Endothelial cell of umbilical vein (primary cell): ENCODE measurements at regions of chr6 and their contacts with region 1.

Region 1: GRCh38 chr6:27518881-27519795 is 46.2 kb upstream of the ZNF184 start:
- DNase-seq: peak; percentile 93
- H3K4me3 ChIP-seq: peak overlapping the region; percentile 47 to 74 (median 61)
- H3K27ac ChIP-seq: peak overlapping the region; percentile 27
- H3K4me1 ChIP-seq: peaks cover 3% of the 10 kb centered on the region
- H3K27me3 ChIP-seq: peaks cover 19 to 30% of the 10 kb centered on the region in 2 experiments
- CTCF ChIP-seq: peak; percentile 57 to 63
- POLR2A ChIP-seq: no peak

Region 2: GRCh38 chr6:27157459-27158315 is 361.5 kb before region 1 on chr6:
- CTCF ChIA-PET with region 1: interaction called, 8 read pairs
- POLR2A ChIA-PET with region 1: no interaction called
- dilution Hi-C with region 1: no loop called
- intact Hi-C with region 1: loop called (anchors 1 kb)
- DNase-seq: peak; percentile 57
- H3K4me3 ChIP-seq: peak overlapping the region; percentile 30 to 64 (median 59)
- H3K27ac ChIP-seq: no peak overlapping the region
- H3K4me1 ChIP-seq: peaks cover 10% of the 10 kb centered on the region
- H3K27me3 ChIP-seq: peaks cover 8 to 11% of the 10 kb centered on the region in 2 experiments
- CTCF ChIP-seq: peak; percentile 42 to 63
- POLR2A ChIP-seq: no peak

Region 3: GRCh38 chr6:27460701-27461100 is 58.4 kb before region 1 on chr6:
- CTCF ChIA-PET with region 1: no interaction called
- POLR2A ChIA-PET with region 1: no interaction called
- dilution Hi-C with region 1: no loop called
- intact Hi-C with region 1: no loop called
- DNase-seq: no peak
- H3K4me3 ChIP-seq: no peak overlapping the region
- H3K27ac ChIP-seq: no peak overlapping the region
- H3K4me1 ChIP-seq: no peaks in the 10 kb centered on the region
- H3K27me3 ChIP-seq: no peaks in the 10 kb centered on the region
- CTCF ChIP-seq: no peak
- POLR2A ChIP-seq: no peak

Region 4: GRCh38 chr6:27472617-27473400 is 46.3 kb before region 1 on chr6 and contains the start of gene ZNF184:
- CTCF ChIA-PET with region 1: interaction called, 8 read pairs
- POLR2A ChIA-PET with region 1: no interaction called
- dilution Hi-C with region 1: no loop called
- intact Hi-C with region 1: loop called (anchors 1 kb)
- DNase-seq: peak; percentile 98
- H3K4me3 ChIP-seq: peak within 1 kb of the TSS; percentile 68 to 94 (median 82)
- H3K27ac ChIP-seq: peak within 1 kb of the TSS; percentile 74
- H3K4me1 ChIP-seq: peaks cover 9% of the 10 kb centered on the region
- H3K27me3 ChIP-seq: peaks cover 9 to 14% of the 10 kb centered on the region in 2 experiments
- CTCF ChIP-seq: no peak
- POLR2A ChIP-seq: peak; percentile 84
- total RNA-seq, gene ZNF184: 5.4 and 6.5 TPM in 2 replicates

Region 5: DNA sequence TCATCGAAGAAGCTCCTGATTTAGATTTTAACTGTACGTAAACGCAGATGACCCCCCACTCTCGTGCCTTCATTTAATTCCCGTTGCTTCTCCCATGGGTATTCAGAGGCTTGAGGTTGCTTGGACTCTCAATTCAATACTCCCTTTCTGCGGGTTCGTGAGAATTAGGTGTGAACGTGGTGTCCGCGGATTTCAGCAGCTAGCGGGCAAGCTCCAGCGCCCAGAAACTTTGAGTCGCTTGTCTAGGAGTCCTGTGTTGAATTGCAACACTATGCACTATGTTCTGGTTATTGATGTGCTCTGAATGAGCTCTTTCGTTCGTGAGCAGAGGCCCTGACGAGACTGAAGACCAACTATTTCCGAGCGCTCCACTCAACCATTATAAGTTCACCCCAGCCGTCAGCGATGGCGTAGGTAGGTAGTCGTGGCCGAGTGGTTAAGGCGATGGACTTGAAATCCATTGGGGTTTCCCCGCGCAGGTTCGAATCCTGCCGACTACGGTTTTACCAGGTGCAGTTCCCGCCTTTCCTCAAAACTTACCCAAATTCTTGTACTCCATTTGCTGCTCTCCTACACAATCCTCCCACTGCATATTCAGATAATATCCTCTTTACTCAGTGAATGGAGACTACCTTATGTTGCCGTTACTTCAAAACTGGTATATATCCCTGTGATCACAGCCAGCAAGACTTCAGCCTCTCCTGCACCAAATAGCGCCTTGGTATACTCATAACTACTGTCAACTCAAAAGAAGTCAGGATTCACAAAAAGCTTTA is 26.3 kb after region 1 on chr6:
- CTCF ChIA-PET with region 1: interaction called, 12 read pairs
- POLR2A ChIA-PET with region 1: no interaction called
- dilution Hi-C with region 1: no loop called
- intact Hi-C with region 1: loop called (anchors 1 kb)
- DNase-seq: peak; percentile 43
- H3K4me3 ChIP-seq: peak overlapping the region; percentile 0 to 74 (median 73)
- H3K27ac ChIP-seq: no peak overlapping the region
- H3K4me1 ChIP-seq: peaks cover 13% of the 10 kb centered on the region
- H3K27me3 ChIP-seq: peaks cover 0 to 6% of the 10 kb centered on the region in 2 experiments
- CTCF ChIP-seq: no peak
- POLR2A ChIP-seq: no peak

Region 6: GRCh38 chr6:27608916-27609883 is 90.1 kb after region 1 on chr6:
- CTCF ChIA-PET with region 1: interaction called, 110 read pairs
- POLR2A ChIA-PET with region 1: no interaction called
- dilution Hi-C with region 1: no loop called
- intact Hi-C with region 1: loop called (anchors 1 kb)
- DNase-seq: peak; percentile 63
- H3K4me3 ChIP-seq: no peak overlapping the region
- H3K27ac ChIP-seq: no peak overlapping the region
- H3K4me1 ChIP-seq: no peaks in the 10 kb centered on the region
- H3K27me3 ChIP-seq: no peaks in the 10 kb centered on the region
- CTCF ChIP-seq: peak; percentile 74 to 79
- POLR2A ChIP-seq: no peak

Region 7: DNA sequence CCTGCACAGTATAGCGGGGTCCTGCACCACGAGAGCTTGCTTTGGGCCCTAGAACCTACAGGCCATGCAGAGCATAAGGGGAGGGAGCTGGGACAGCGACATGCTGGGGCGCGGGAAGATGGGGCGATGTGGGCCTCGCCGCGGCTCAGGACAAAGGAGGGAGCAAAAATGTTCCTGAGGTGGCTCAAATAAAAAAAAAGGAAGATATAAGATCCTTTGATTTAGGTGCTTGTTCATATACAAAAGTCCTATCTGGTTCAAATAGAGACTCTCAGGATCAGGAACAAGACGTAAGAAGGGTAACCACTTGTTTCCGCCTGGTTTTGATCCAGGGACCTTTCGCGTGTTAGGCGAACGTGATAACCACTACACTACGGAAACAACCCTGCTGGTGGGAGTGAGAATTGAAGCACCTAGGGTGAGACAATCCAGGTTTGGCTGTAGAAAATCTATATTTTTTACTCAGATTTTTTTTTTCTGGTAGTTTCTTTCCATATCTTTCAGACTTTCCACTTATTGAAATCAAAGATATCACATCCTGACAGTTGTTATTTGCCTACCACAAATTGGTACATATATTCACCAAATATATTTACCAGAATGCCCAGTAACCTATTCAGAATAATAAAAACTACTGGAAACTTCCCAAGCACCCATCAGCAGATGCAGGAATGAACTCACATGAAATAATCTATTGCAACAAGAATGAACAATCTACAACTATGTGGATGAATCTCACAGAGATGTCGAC is 131.7 kb after region 1 on chr6:
- CTCF ChIA-PET with region 1: no interaction called
- POLR2A ChIA-PET with region 1: no interaction called
- dilution Hi-C with region 1: no loop called
- intact Hi-C with region 1: no loop called
- DNase-seq: peak; percentile 22
- H3K4me3 ChIP-seq: no peak overlapping the region
- H3K27ac ChIP-seq: no peak overlapping the region
- H3K4me1 ChIP-seq: no peaks in the 10 kb centered on the region
- H3K27me3 ChIP-seq: peaks cover 0 to 2% of the 10 kb centered on the region in 2 experiments
- CTCF ChIP-seq: peak in 1 of 2 donors; percentile 17
- POLR2A ChIP-seq: no peak

Region 8: GRCh38 chr6:27662769-27663168 is 143.6 kb after region 1 on chr6:
- CTCF ChIA-PET with region 1: no interaction called
- POLR2A ChIA-PET with region 1: no interaction called
- dilution Hi-C with region 1: no loop called
- intact Hi-C with region 1: no loop called
- DNase-seq: no peak
- H3K4me3 ChIP-seq: no peak overlapping the region
- H3K27ac ChIP-seq: no peak overlapping the region
- H3K4me1 ChIP-seq: peaks cover 3% of the 10 kb centered on the region
- H3K27me3 ChIP-seq: peaks cover 10 to 13% of the 10 kb centered on the region in 2 experiments
- CTCF ChIP-seq: no peak
- POLR2A ChIP-seq: no peak

Region 9: DNA sequence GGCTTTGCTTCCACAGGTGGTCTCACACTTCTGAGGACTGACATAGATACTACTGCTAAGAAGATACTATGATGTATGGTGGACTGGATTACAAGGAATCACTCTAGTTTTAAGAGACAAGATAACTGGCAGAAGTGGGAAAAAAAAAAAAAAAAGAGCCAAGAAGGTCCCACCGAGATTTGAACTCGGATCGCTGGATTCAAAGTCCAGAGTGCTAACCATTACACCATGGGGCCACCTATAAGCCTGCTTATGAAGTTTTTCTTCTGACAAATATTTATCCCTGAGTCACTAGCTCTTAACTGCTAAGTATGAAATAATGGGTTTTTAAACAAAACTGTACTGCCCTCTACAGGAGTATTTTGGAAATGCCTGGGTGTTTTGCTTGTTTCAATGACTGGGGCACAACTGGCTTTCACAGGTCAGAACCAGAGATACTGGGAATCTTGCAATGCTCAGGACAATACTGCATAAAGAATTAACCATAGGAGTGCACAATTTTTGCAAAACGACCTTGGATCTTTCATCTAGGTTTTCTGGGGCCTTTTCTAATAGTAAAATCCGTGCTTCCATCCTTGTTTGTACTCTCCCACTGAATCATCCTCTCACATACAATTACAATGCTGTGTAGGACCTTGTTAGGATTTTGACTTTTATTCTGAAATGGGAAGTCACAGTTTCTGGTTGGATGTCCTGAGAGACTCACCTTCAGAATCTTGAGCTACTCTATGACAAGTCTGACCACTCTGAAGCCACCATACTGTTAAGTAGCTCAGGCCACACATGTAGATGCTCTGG is 276.8 kb after region 1 on chr6:
- CTCF ChIA-PET with region 1: interaction called, 20 read pairs
- POLR2A ChIA-PET with region 1: no interaction called
- dilution Hi-C with region 1: no loop called
- intact Hi-C with region 1: loop called (anchors 1 kb)
- DNase-seq: peak; percentile 95
- H3K4me3 ChIP-seq: no peak overlapping the region
- H3K27ac ChIP-seq: no peak overlapping the region
- H3K4me1 ChIP-seq: peaks cover 7% of the 10 kb centered on the region
- H3K27me3 ChIP-seq: no peaks in the 10 kb centered on the region
- CTCF ChIP-seq: peak; percentile 60 to 69
- POLR2A ChIP-seq: no peak